Breast epithelium (tissue), 4 donors: ENCODE measurements at regions of chrX and their contacts with region 1.

Region 1: DNA sequence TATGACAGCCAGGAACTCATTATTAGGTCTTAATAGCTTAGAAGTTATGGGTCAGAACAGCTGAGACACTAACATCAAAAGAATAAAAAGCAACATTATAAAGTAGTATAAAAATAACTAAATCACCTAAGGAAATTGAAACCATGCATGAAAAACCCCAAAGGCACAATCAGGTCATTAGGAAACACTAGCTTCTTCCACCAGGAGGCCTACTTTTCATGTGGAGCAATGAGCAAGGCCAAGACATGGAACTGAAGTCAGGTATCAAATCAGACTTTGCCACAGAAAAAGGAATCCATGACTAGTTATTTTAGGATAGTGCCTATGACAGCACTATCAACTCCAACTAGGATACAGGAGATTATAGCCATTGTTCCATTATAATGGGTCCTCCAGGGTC is 7.9 kb downstream of the HUWE1 start:
- DNase-seq: no peak
- H3K4me3 ChIP-seq: no peak overlapping the region
- H3K27ac ChIP-seq: no peak overlapping the region
- H3K4me1 ChIP-seq: peaks cover 0 to 6% of the 10 kb centered on the region in 2 donors
- H3K27me3 ChIP-seq: peaks cover 0 to 10% of the 10 kb centered on the region in 2 donors
- CTCF ChIP-seq: no peak
- POLR2A ChIP-seq: no peak

Region 2: DNA sequence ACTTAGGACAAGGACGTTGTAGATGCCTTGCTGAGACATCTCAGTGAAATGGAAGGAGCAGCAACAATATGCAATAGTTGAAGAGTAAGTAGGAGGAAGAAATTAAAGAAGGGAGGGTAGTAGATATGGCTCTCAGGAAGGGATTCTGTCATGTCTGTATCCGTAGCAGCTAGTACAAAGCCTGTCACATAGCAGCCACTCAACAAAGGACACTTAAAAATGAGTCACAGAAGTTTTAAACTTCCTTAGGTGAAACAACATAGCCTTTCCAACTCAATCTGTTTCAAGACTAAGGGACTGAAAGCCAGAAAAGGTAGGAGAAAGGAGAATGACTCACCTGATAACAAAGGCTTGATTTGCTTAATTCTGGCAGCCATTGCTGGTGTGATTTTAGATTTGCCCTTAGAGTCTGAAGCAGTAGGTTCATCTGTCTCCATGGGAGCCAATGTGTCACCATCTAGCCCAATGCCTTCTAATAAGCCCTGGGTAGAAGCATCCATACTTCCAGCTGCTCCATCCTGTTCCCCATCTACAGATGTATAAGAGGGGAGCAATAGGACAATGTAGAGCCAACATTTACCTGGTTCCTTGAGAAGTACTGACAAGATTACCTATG is 78.8 kb before region 1 on chrX:
- intact Hi-C with region 1: loop called (anchors 2 kb)
- DNase-seq: no peak
- H3K4me3 ChIP-seq: no peak overlapping the region
- H3K27ac ChIP-seq: no peak overlapping the region
- H3K4me1 ChIP-seq: no peaks in the 10 kb centered on the region
- H3K27me3 ChIP-seq: peaks cover 0 to 33% of the 10 kb centered on the region in 2 donors
- CTCF ChIP-seq: no peak
- POLR2A ChIP-seq: no peak